B cell (primary cell): ENCODE measurements at regions of chr19 and their contacts with region 1.

Region 1: GRCh38 chr19:57240311-57241090 is at the start of gene ZNF805:
- DNase-seq: peak; percentile 97
- ATAC-seq: peak; percentile 93
- H3K4me3 ChIP-seq: peak within 1 kb of the TSS; percentile 64 to 99 (median 94)
- H3K4me3 Mint-ChIP-seq: peak within 1 kb of the TSS; percentile 95
- H3K27ac ChIP-seq: peak within 1 kb of the TSS; percentile 77 to 86
- H3K27ac Mint-ChIP-seq: peak within 1 kb of the TSS; percentile 94
- H3K4me1 ChIP-seq: peaks cover 19 to 20% of the 10 kb centered on the region in 2 donors
- H3K4me1 Mint-ChIP-seq: peaks cover 33% of the 10 kb centered on the region
- H3K27me3 ChIP-seq: no peaks in the 10 kb centered on the region
- H3K27me3 Mint-ChIP-seq: no peaks in the 10 kb centered on the region
- CTCF ChIP-seq: no peak
- total RNA-seq, gene ZNF805: 18.9 and 20.0 TPM in 2 replicates

Region 2: DNA sequence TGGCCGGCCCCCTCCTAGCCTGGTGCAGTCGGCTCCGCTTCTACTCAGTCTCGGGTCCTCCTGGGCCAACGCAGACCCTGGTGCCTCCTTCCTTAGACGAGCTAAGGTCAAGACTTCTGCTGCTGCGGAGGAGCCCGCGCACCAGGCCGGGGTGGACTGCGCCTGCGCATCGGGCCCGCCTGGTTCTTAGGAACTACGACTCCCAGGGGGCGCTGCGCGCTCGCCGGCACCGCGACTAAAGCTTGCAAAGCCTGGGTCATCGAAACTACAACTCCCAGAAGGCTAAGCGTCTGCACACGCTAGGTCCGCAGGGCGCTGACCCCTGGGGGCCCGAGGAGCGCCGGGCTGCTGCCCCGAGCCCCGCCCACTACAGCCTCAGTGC is 568.9 kb before region 1 on chr19 and contains the start of gene ZNF835:
- CTCF ChIA-PET with region 1: no interaction called
- POLR2A ChIA-PET with region 1: no interaction called
- intact Hi-C with region 1: loop called (anchors 2 kb)
- DNase-seq: peak; percentile 92
- ATAC-seq: peak; percentile 98
- H3K4me3 ChIP-seq: peak within 1 kb of the TSS; percentile 27 to 83 (median 72)
- H3K4me3 Mint-ChIP-seq: peak within 1 kb of the TSS; percentile 98
- H3K27ac ChIP-seq: no peak within 1 kb of the TSS
- H3K27ac Mint-ChIP-seq: peak within 1 kb of the TSS; percentile 89
- H3K4me1 ChIP-seq: peaks cover 9 to 18% of the 10 kb centered on the region in 2 donors
- H3K4me1 Mint-ChIP-seq: peaks cover 14% of the 10 kb centered on the region
- H3K27me3 ChIP-seq: no peaks in the 10 kb centered on the region
- H3K27me3 Mint-ChIP-seq: no peaks in the 10 kb centered on the region
- CTCF ChIP-seq: peak; percentile 33
- total RNA-seq, gene ZNF835: 7.0 and 10.1 TPM in 2 replicates

Region 3: GRCh38 chr19:57191141-57192076 is 49.1 kb before region 1 on chr19 and contains the start of gene ZNF264:
- CTCF ChIA-PET with region 1: no interaction called
- POLR2A ChIA-PET with region 1: no interaction called
- intact Hi-C with region 1: no loop called
- DNase-seq: peak; percentile 92
- ATAC-seq: peak; percentile 98
- H3K4me3 ChIP-seq: peak within 1 kb of the TSS; percentile 69 to 94 (median 81)
- H3K4me3 Mint-ChIP-seq: peak within 1 kb of the TSS; percentile 92
- H3K27ac ChIP-seq: peak within 1 kb of the TSS; percentile 73 to 81
- H3K27ac Mint-ChIP-seq: peak within 1 kb of the TSS; percentile 96
- H3K4me1 ChIP-seq: peaks cover 20 to 21% of the 10 kb centered on the region in 2 donors
- H3K4me1 Mint-ChIP-seq: peaks cover 25% of the 10 kb centered on the region
- H3K27me3 ChIP-seq: peaks cover 0 to 11% (median 1%) of the 10 kb centered on the region in 4 experiments
- H3K27me3 Mint-ChIP-seq: peaks cover 9% of the 10 kb centered on the region
- CTCF ChIP-seq: no peak
- total RNA-seq, gene ZNF264: 72.4 and 82.6 TPM in 2 replicates

Region 4: GRCh38 chr19:57227502-57227901 is 13.0 kb before region 1 on chr19:
- CTCF ChIA-PET with region 1: no interaction called
- POLR2A ChIA-PET with region 1: no interaction called
- intact Hi-C with region 1: no loop called
- DNase-seq: no peak
- ATAC-seq: no peak
- H3K4me3 ChIP-seq: no peak overlapping the region
- H3K4me3 Mint-ChIP-seq: no peak overlapping the region
- H3K27ac ChIP-seq: no peak overlapping the region
- H3K27ac Mint-ChIP-seq: no peak overlapping the region
- H3K4me1 ChIP-seq: no peaks in the 10 kb centered on the region
- H3K4me1 Mint-ChIP-seq: no peaks in the 10 kb centered on the region
- H3K27me3 ChIP-seq: no peaks in the 10 kb centered on the region
- H3K27me3 Mint-ChIP-seq: no peaks in the 10 kb centered on the region
- CTCF ChIP-seq: no peak

Region 5: DNA sequence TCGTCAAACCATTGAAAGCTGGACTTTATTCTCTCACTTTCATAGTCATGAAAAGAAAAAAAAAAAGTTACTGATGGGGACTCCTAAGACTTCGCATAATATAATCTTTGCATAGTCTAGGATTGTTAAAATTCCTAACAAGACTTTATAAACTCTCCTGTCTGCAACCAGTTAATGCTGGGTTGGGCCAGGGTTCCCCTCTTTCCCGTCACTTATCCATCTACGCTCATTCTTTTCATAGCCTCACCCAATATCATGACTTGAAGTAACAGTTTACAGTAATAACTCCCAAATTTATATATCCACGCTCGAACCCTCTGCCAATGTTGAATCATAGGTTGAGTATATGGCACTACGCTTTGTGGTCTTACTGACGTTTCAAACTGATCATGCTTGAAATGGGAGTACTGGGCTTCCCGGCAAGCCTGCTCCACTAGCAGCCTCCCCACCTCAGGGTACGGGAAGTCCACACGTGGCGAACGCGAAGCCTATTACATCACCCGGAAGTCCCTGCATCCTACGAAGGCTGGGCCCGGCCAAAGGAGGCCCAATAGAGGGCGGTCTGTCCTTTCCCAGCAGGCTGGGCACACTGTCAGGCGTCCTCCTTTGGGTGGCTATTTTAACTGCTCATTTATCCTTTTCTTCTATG is 39.0 kb after region 1 on chr19:
- CTCF ChIA-PET with region 1: no interaction called
- POLR2A ChIA-PET with region 1: interaction called, 7 read pairs
- intact Hi-C with region 1: loop called (anchors 1 kb)
- DNase-seq: peak; percentile 92
- ATAC-seq: peak; percentile 73
- H3K4me3 ChIP-seq: peak overlapping the region; percentile 73 to 94 (median 91)
- H3K4me3 Mint-ChIP-seq: no peak overlapping the region
- H3K27ac ChIP-seq: peak overlapping the region; percentile 98 to 100
- H3K27ac Mint-ChIP-seq: no peak overlapping the region
- H3K4me1 ChIP-seq: peaks cover 29 to 33% of the 10 kb centered on the region in 2 donors
- H3K4me1 Mint-ChIP-seq: peaks cover 31% of the 10 kb centered on the region
- H3K27me3 ChIP-seq: no peaks in the 10 kb centered on the region
- H3K27me3 Mint-ChIP-seq: no peaks in the 10 kb centered on the region
- CTCF ChIP-seq: peak; percentile 26

Region 6: DNA sequence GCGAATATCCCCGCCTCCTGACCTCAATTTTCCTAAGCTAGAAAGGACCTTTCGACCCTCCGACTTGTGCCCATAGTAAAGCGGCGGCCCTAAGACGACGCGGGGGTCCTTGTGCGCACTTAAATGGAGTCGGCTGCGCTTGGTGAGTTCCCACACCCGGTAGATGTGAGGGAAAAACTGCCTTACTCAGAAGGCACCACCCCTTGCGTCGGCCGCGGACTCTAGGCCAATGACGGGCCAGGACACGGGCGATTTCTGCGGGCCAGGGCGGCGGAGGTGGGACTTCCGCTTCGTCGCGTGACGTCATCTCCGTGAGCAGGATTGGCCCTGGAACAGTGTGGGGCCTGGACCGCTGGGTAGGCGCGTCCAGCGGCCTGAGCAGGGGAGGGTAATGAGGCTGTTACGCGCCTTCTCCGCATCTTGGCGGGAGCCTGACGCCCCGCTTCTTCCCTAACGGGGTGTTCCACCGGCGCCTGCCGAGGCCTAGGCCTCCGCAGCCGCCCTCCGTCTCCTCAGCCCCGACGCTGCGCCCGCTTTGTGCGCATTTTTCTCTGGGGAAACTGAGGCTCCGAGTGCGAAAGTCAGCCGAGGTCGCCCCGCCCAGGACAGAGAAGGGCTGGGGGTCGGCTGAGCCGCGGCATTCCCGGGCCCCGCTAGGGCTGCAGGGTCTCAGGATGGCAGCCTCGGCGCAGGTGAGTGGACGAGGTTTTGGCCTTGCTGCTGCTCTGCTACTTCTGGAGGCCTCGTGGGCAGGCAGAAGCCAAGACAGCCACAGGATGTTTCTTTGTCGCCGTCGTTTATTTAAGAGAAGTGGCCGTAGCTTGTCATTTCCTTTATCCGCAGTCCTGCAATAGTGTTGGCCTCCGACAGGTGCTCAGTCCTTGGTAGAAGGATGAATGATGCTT is 79.9 kb after region 1 on chr19 and contains the start of gene ZNF543:
- CTCF ChIA-PET with region 1: no interaction called
- POLR2A ChIA-PET with region 1: no interaction called
- intact Hi-C with region 1: loop called (anchors 1 kb)
- DNase-seq: peak; percentile 96
- ATAC-seq: peak; percentile 98
- H3K4me3 ChIP-seq: peak within 1 kb of the TSS; percentile 50 to 95 (median 89)
- H3K4me3 Mint-ChIP-seq: peak within 1 kb of the TSS; percentile 93
- H3K27ac ChIP-seq: peak within 1 kb of the TSS; percentile 85 to 89
- H3K27ac Mint-ChIP-seq: peak within 1 kb of the TSS; percentile 96
- H3K4me1 ChIP-seq: peaks cover 19 to 23% of the 10 kb centered on the region in 2 donors
- H3K4me1 Mint-ChIP-seq: peaks cover 32% of the 10 kb centered on the region
- H3K27me3 ChIP-seq: peaks cover 0 to 21% (median 13%) of the 10 kb centered on the region in 4 experiments
- H3K27me3 Mint-ChIP-seq: peaks cover 24% of the 10 kb centered on the region
- CTCF ChIP-seq: no peak
- total RNA-seq, gene ZNF543: 16.7 and 19.6 TPM in 2 replicates

Region 7: DNA sequence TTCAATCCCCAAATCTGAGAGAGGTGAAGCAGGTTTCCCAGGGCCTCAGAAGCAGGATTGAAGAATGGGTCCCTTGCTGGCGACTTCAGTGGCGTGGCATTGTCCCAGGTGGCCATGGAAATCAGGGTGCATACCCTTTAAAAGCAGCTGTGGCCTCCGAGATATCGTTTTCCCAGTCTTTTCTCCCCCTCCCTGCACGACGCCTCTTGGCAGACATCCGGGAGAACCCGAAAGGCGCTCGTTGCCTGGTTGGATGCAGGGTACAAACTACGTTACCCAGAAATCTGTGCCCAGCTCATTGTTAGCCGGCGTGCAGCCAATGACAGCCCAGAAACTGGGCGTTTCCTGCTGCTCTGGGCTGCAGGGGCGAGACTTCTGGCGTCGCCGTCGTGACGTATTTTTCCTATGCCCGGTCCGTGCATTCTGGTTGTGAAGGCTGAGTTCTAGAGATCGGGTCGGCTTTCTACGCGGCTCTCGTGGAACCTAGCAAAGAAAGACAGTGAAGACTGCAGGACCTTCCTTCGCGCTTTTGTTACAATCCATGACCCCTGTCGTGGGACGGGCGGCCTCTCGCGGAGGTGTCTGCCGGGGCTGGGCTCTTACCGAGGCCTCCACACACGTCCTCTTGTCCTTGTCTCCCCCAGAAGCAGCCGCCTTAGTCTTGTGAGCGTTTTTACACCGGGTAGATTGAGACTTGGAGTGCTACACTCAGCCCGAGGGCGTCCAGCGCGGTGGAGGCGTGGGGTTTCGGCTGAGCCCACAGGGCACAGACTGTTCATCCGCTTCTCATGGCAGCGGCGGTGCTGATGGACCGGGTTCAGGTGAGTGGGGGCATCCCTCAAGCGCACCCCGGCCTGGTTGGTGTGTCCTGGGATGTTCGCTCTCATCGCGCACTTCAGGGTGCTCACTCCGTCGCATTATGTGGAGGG is 110.6 kb after region 1 on chr19 and contains the start of gene ZNF304:
- CTCF ChIA-PET with region 1: no interaction called
- POLR2A ChIA-PET with region 1: no interaction called
- intact Hi-C with region 1: loop called (anchors 1 kb)
- DNase-seq: peak; percentile 90
- ATAC-seq: peak; percentile 100
- H3K4me3 ChIP-seq: peak within 1 kb of the TSS; percentile 66 to 97 (median 87)
- H3K4me3 Mint-ChIP-seq: peak within 1 kb of the TSS; percentile 97
- H3K27ac ChIP-seq: peak within 1 kb of the TSS; percentile 50 to 86
- H3K27ac Mint-ChIP-seq: peak within 1 kb of the TSS; percentile 90
- H3K4me1 ChIP-seq: peaks cover 15 to 19% of the 10 kb centered on the region in 2 donors
- H3K4me1 Mint-ChIP-seq: peaks cover 31% of the 10 kb centered on the region
- H3K27me3 ChIP-seq: no peaks in the 10 kb centered on the region
- H3K27me3 Mint-ChIP-seq: peaks cover 4% of the 10 kb centered on the region
- CTCF ChIP-seq: no peak
- total RNA-seq, gene ZNF304: 16.2 and 16.9 TPM in 2 replicates

Region 8: DNA sequence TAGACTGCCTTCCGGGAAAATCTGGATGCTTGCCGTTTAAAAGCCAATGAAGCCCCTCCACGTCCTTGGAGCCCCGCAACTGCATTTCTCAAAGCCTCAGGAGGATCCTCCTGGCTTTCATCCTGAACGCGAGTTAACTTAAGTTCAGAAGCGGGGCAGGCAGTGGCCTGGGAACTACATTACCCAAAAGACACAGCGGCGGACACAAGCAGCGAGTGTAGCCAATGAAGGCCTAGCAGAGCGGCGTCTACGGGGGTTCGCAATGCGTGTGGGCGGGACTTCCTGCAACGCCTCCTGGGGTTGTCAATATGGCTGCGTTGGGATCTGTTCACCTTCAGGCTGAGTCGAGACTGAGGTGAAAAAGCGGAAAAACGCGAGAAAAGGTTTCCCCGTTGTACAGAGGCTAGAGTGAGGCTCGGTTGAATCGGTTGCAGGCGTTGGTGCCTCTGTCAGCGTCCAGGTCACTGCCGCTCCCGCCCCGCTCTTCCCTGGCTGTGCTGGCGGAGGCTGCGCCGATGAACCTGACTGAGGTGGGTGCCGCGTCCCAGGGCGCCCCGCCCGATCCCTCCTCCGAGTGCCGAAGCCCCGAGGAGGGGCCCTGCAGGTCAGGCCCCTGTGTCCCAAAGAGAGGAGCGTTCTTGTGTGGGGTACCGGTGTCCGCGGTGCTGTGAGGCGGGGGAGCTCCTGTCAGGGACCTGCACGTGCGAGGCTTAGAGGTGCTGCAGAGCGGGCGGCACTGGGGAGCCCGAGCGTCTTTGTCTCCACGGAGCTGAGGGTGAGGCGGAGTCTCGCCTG is 170.6 kb after region 1 on chr19 and contains the start of gene ZNF17:
- CTCF ChIA-PET with region 1: no interaction called
- POLR2A ChIA-PET with region 1: no interaction called
- intact Hi-C with region 1: loop called (anchors 1 kb)
- DNase-seq: peak; percentile 93
- ATAC-seq: peak; percentile 100
- H3K4me3 ChIP-seq: peak within 1 kb of the TSS; percentile 66 to 98 (median 89)
- H3K4me3 Mint-ChIP-seq: peak within 1 kb of the TSS; percentile 97
- H3K27ac ChIP-seq: peak within 1 kb of the TSS; percentile 22 to 77
- H3K27ac Mint-ChIP-seq: peak within 1 kb of the TSS; percentile 89
- H3K4me1 ChIP-seq: peaks cover 12 to 17% of the 10 kb centered on the region in 2 donors
- H3K4me1 Mint-ChIP-seq: peaks cover 26% of the 10 kb centered on the region
- H3K27me3 ChIP-seq: no peaks in the 10 kb centered on the region
- H3K27me3 Mint-ChIP-seq: no peaks in the 10 kb centered on the region
- CTCF ChIP-seq: no peak
- total RNA-seq, gene ZNF17: 25.8 and 30.7 TPM in 2 replicates